ENCODE measurements at regions of chr14 and their contacts with region 1.

Region 1: GRCh38 chr14:47039336-47039931 is 387.9 kb upstream of the RPL10L start:
- DNase-seq: no peak
- ATAC-seq: no peak

Region 2: GRCh38 chr14:48435221-48435620 is 1395.8 kb after region 1 on chr14:
- intact Hi-C with region 1: loop called (anchors 10 kb)
- DNase-seq: no peak
- ATAC-seq: no peak